ENCODE measurements at regions of chr2 and their contacts with region 1.

Region 1: DNA sequence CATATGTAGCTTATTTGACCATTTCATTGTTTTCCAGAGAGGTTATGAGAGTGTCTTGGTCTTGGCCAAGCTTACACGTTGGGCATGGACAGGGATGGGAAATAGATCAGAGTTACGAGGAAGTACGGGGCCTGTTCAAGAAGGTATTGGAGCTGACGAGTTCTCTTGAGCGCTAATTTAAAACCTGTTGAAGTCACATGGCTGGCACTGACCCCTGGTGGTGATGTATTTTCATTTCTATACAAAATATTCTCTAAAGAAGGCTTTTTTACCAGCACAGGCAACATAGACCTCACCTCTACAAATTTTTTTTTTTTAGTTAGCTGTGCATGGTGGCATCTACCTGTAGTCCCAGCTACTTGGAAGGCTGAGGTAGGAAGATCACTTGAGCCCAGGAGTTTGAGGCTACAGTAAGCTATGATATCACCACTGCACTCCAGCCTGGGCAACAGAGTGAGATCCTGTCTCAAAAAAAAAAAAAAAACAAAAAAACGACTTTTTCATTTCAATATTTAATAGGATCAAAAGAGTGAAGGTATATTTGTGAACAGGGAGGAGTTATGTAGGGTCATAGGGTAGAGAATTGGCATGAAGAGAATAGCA is 19.6 kb downstream of the UGP2 start:
- DNase-seq: peak; percentile 80
- H3K4me3 ChIP-seq: no peak overlapping the region
- H3K27ac ChIP-seq: no peak overlapping the region
- H3K4me1 ChIP-seq: no peaks in the 10 kb centered on the region
- CTCF ChIP-seq: peak; percentile 87

Region 2: DNA sequence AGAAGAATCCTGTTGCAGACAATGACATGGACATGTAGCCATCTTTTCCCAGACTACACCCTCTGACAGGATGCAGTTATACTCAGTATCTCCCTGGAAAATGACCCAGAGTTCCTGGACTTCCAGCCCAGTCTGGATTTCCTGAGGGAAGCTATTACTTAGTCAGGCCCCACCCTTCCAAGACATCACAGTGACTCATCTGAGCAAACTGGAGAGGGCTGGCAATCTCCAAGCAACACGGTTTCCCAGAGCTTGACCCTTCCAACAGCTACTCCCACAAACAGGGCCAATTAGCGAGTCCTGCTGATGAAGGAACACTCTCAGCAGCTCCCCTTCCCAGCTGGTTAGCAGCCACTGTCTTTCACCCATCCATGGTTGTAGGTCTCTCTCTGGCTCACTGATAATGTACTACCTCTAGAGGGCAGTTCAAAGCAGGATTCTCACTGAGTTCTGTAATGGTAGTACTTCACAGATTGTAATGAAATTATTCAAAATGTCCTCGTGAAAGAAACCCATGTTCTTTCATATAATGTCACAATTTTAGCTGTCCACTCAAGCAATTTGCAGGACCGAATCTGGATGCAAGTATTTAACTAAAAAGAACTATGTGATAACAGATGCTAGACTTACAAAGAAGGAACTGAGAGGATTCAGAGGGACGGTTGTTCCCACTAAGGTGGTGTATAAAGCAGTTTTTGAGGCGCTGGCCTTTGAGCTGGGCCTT is 162.3 kb before region 1 on chr2:
- CTCF ChIA-PET with region 1: interaction called, 6 read pairs
- POLR2A ChIA-PET with region 1: interaction called, 4 read pairs
- intact Hi-C with region 1: loop called (anchors 1 kb)
- DNase-seq: peak; percentile 64
- H3K4me3 ChIP-seq: no peak overlapping the region
- H3K27ac ChIP-seq: no peak overlapping the region
- H3K4me1 ChIP-seq: no peaks in the 10 kb centered on the region
- CTCF ChIP-seq: peak; percentile 84

Region 3: DNA sequence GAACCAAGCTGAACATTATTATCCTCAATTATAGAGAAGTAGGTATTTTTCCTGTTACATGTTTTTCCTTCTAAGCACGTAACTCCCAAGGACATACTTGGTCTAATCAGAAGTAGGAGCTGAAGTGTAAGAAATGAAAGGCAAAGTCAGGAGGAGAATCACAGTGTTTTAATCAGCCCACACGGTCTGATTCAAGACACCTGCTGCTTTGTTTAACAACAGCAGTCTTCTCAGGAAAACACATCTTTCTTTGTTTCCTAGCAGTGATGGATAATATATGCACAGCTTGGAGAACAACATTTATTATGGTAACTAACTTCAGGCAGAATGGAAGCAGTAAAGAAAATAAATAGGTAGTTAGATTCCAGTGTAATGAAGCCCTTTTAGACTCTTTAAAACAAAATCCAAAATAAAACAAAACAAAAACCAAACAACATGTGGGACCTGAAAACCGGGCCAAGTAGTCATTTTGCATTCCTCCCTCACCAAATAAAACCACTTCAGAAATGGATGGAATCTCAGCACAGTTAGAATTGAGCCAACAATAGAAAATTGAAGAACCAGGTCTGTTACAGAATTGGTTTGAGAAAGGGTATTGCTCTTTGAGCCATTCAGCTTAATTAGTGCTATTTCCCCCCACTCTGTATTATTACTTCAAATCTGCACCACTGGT is 80.7 kb before region 1 on chr2:
- CTCF ChIA-PET with region 1: no interaction called
- POLR2A ChIA-PET with region 1: interaction called, 3 read pairs
- intact Hi-C with region 1: loop called (anchors 5 kb)
- DNase-seq: no peak
- H3K4me3 ChIP-seq: no peak overlapping the region
- H3K27ac ChIP-seq: no peak overlapping the region
- H3K4me1 ChIP-seq: peaks cover 4% of the 10 kb centered on the region
- CTCF ChIP-seq: no peak; the same call in 1 of the 2 replicates